Naive thymus-derived CD4-positive, alpha-beta T cell (primary cell): ENCODE measurements at regions of chr6 and their contacts with region 1.

Region 1: DNA sequence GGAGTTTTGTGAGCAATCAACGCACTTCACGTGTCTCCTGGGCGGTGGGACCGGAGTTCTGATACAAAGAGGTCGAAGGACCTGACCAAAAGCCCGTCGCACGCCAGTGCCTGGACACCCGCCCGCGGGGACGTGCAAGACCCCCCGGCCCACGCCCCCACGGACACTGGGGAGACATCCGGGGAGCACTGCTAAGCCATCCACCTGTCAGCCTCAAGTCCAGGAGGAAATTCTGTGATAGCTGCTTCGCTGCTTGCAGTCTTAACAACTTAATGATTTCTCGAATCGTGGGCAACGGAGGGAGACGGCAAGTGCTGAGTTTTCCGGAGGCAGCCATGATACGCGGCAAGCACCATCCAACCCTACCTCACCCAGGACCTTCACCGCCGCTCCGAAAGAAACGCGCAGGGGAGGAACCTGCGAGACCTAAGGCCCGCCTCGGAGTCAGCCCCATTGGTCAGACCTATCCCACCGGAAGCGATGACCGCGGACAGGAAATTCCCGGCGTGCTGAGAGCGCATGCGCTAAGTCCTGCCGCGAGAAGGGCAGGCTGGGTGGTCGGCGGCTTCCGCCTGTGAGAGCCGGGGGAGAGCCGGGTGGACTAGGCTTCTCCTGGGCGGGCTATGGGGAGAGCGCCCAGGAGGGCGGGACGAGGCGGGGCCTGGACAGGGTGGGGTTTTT is at the start of gene TFB1M:
- DNase-seq: peak; percentile 84 to 98 (median 94)
- ATAC-seq: peak; percentile 96
- H3K4me3 ChIP-seq: peak within 1 kb of the TSS; percentile 86
- H3K4me3 Mint-ChIP-seq: peak within 1 kb of the TSS; percentile 80 to 98 (median 96)
- H3K27ac ChIP-seq: peak within 1 kb of the TSS; percentile 90
- H3K27ac Mint-ChIP-seq: peak within 1 kb of the TSS; percentile 84 to 97 (median 93)
- H3K4me1 ChIP-seq: peaks cover 3 to 5% of the 10 kb centered on the region in 2 donors
- H3K4me1 Mint-ChIP-seq: peaks cover 10 to 48% (median 41%) of the 10 kb centered on the region in 7 donors
- H3K27me3 ChIP-seq: no peaks in the 10 kb centered on the region
- H3K27me3 Mint-ChIP-seq: no peaks in the 10 kb centered on the region
- total RNA-seq, gene TFB1M: 20.5 to 45.4 (median 29.7) TPM

Region 2: GRCh38 chr6:154675602-154676088 is 638.6 kb before region 1 on chr6:
- CTCF ChIA-PET with region 1: interaction called, 4 read pairs
- POLR2A ChIA-PET with region 1: no interaction called
- intact Hi-C with region 1: loop called (anchors 1 to 2 kb)
- DNase-seq: peak; percentile 60 to 89 (median 86)
- ATAC-seq: peak; percentile 100
- H3K4me3 ChIP-seq: no peak overlapping the region
- H3K4me3 Mint-ChIP-seq: no peak overlapping the region
- H3K27ac ChIP-seq: no peak overlapping the region
- H3K27ac Mint-ChIP-seq: no peak overlapping the region
- H3K4me1 ChIP-seq: no peaks in the 10 kb centered on the region
- H3K4me1 Mint-ChIP-seq: no peaks in the 10 kb centered on the region
- H3K27me3 ChIP-seq: no peaks in the 10 kb centered on the region
- H3K27me3 Mint-ChIP-seq: peaks cover 0 to 3% (median 0%) of the 10 kb centered on the region in 5 donors

Region 3: DNA sequence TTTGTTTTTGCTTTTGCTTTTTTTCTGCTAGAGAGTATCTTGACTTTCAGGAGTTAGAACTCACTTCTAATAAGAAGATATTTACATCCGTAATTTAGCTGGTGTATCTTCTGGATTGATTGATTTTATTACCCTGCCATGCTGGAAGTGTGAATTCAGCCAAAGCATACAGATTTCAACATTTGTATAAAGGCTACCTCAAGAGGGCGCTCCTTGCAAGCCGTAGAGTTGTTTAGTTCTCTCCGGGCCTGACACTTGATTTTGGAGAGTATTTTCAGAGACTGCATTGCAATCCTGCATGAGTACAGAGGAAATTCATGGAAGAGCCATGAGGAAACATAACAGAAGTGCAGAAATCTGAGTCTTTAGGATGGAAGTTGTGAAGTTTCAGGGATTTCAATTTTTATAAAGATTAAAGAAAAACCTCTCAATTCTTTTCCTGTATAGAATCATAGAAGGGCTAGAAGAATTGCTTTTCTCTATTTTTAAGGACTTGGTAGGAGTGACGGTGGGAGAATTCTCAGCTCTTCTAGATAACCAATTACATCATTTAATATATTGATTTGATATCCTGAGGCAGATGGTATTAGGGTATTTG is 385.8 kb before region 1 on chr6:
- CTCF ChIA-PET with region 1: no interaction called
- POLR2A ChIA-PET with region 1: no interaction called
- intact Hi-C with region 1: loop called (anchors 1 to 5 kb)
- DNase-seq: peak in 8 of 9 donors; percentile 7 to 55 (median 43)
- ATAC-seq: peak; percentile 57
- H3K4me3 ChIP-seq: no peak overlapping the region
- H3K4me3 Mint-ChIP-seq: no peak overlapping the region
- H3K27ac ChIP-seq: no peak overlapping the region
- H3K27ac Mint-ChIP-seq: no peak overlapping the region
- H3K4me1 ChIP-seq: no peaks in the 10 kb centered on the region
- H3K4me1 Mint-ChIP-seq: peaks cover 0 to 17% (median 8%) of the 10 kb centered on the region in 7 donors
- H3K27me3 ChIP-seq: no peaks in the 10 kb centered on the region
- H3K27me3 Mint-ChIP-seq: no peaks in the 10 kb centered on the region

Region 4: GRCh38 chr6:155234167-155234566 is 80.1 kb before region 1 on chr6:
- CTCF ChIA-PET with region 1: no interaction called
- POLR2A ChIA-PET with region 1: no interaction called
- intact Hi-C with region 1: no loop called
- DNase-seq: no peak
- ATAC-seq: no peak
- H3K4me3 ChIP-seq: no peak overlapping the region
- H3K4me3 Mint-ChIP-seq: no peak overlapping the region
- H3K27ac ChIP-seq: no peak overlapping the region
- H3K27ac Mint-ChIP-seq: no peak overlapping the region
- H3K4me1 ChIP-seq: no peaks in the 10 kb centered on the region
- H3K4me1 Mint-ChIP-seq: no peaks in the 10 kb centered on the region
- H3K27me3 ChIP-seq: no peaks in the 10 kb centered on the region
- H3K27me3 Mint-ChIP-seq: peaks cover 0 to 17% (median 13%) of the 10 kb centered on the region in 5 donors

Region 5: DNA sequence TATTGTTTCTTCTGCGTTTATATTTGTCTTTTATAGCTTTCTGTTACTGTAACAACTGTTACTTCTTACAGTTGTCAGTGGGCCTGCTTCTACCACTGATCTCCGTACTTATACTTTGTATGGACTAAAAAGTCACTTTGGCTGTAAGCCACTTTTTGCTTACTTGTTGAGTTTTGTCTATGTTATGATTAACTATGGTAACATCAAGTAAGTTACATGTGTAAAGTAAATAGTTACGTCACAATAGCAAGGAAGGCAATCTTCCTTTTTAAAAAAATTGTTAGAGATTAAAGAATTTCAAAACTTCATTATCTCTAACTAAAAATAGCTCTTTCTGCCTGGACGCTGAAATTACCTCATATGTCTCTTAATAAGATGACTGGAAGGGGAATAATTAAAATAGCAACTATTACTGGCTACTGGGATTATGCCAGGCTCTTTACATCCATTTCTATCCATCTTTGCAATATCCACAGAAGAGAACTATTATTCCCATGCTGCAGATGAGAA is 10.8 kb before region 1 on chr6:
- CTCF ChIA-PET with region 1: interaction called, 5 read pairs
- POLR2A ChIA-PET with region 1: interaction called, 11 read pairs
- intact Hi-C with region 1: no loop called
- DNase-seq: no peak
- ATAC-seq: no peak
- H3K4me3 ChIP-seq: no peak overlapping the region
- H3K4me3 Mint-ChIP-seq: no peak overlapping the region
- H3K27ac ChIP-seq: no peak overlapping the region
- H3K27ac Mint-ChIP-seq: no peak overlapping the region
- H3K4me1 ChIP-seq: no peaks in the 10 kb centered on the region
- H3K4me1 Mint-ChIP-seq: peaks cover 7 to 48% (median 18%) of the 10 kb centered on the region in 7 donors
- H3K27me3 ChIP-seq: no peaks in the 10 kb centered on the region
- H3K27me3 Mint-ChIP-seq: no peaks in the 10 kb centered on the region

Region 6: GRCh38 chr6:155340464-155341129 is 26.4 kb after region 1 on chr6:
- CTCF ChIA-PET with region 1: no interaction called
- POLR2A ChIA-PET with region 1: no interaction called
- intact Hi-C with region 1: loop called in 1 of 2 experiments (anchors 1 kb)
- DNase-seq: no peak
- ATAC-seq: no peak
- H3K4me3 ChIP-seq: no peak overlapping the region
- H3K4me3 Mint-ChIP-seq: peak overlapping the region in 2 of 10 donors; percentile 6 to 13
- H3K27ac ChIP-seq: no peak overlapping the region
- H3K27ac Mint-ChIP-seq: peak overlapping the region in 1 of 9 donors; percentile 33
- H3K4me1 ChIP-seq: peaks cover 0 to 13% of the 10 kb centered on the region in 2 donors
- H3K4me1 Mint-ChIP-seq: peaks cover 14 to 41% (median 20%) of the 10 kb centered on the region in 7 donors
- H3K27me3 ChIP-seq: no peaks in the 10 kb centered on the region
- H3K27me3 Mint-ChIP-seq: no peaks in the 10 kb centered on the region

Region 7: DNA sequence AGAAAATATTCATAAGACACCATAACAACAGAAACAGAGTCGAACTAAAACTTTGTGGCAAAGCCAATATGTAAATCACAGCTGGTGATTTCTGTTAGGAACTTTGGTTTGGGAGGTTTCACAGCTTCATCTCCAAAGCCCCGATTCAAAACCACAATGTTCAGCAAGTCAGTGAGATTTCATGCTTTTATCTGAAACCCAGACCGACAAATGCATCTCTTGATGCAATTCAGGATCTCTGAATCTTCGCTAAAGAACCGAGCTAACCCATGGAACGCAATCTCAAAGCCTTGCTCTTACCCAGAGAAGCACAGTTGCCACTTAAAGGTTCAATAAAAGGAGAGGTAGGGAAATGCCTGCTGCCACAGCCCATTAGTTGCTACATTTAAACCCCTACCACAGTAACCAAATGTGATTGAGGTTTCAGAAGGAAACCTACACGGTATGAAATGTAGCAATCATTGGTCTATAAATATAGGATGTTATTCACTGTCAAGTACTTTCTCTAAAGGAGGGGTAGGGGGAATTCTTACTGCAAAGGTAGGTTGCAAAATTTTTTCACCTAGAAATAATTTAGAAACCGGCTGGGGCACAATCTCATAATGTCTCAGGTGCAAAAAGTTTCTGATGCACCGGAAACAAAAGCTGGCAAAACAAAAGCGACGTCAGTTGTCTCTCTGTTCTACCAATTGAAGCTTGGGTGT is 1082.0 kb after region 1 on chr6:
- CTCF ChIA-PET with region 1: no interaction called
- POLR2A ChIA-PET with region 1: interaction called, 3 read pairs
- intact Hi-C with region 1: loop called in 1 of 2 experiments (anchors 2 kb)
- DNase-seq: peak in 7 of 9 donors; percentile 67 to 85 (median 77)
- ATAC-seq: peak; percentile 85
- H3K4me3 ChIP-seq: peak overlapping the region; percentile 14
- H3K4me3 Mint-ChIP-seq: peak overlapping the region; percentile 49 to 95 (median 84)
- H3K27ac ChIP-seq: peak overlapping the region; percentile 85
- H3K27ac Mint-ChIP-seq: peak overlapping the region; percentile 60 to 100 (median 99)
- H3K4me1 ChIP-seq: peaks cover 16 to 67% of the 10 kb centered on the region in 2 donors
- H3K4me1 Mint-ChIP-seq: peaks cover 17 to 99% (median 89%) of the 10 kb centered on the region in 7 donors
- H3K27me3 ChIP-seq: no peaks in the 10 kb centered on the region
- H3K27me3 Mint-ChIP-seq: peaks cover 0 to 40% (median 0%) of the 10 kb centered on the region in 5 donors